ENCODE measurements at regions of chr17 and their contacts with region 1.

Region 1: GRCh38 chr17:50949989-50950881 is 84.1 kb upstream of the TOB1 start:
- DNase-seq: peak; percentile 33
- H3K4me3 ChIP-seq: no peak overlapping the region
- CTCF ChIP-seq: peak; percentile 69

Region 2: DNA sequence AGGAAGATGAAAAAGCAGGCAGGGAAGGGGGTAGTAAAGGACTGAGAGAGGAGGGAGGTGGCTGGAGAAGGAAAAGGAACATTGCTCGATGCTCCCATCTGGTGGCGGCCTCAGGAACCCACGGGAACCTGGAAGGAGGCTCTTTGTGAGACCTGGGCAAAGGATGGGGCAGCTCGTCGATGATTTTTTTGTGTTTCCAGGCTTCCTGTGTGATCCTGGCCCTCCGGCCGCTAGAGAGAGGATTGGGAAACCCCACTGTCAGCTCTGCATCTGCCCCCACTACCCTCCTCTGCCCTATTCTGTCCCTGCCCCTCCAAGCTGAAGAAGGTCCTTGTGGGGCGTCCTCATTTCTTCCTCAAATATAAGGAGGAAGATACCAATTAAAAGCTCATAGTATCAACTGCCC is 108.3 kb before region 1 on chr17:
- in situ Hi-C with region 1: loop called (anchors 10 kb)
- DNase-seq: peak; percentile 39
- H3K4me3 ChIP-seq: no peak overlapping the region
- CTCF ChIP-seq: peak; percentile 87

Region 3: GRCh38 chr17:50865984-50866774 is 84.1 kb before region 1 on chr17 and contains the start of gene TOB1:
- in situ Hi-C with region 1: loop called (anchors 5 kb)
- DNase-seq: peak; percentile 77
- H3K4me3 ChIP-seq: peak within 1 kb of the TSS; percentile 72
- CTCF ChIP-seq: no peak

Region 4: GRCh38 chr17:51035431-51035830 is 85.2 kb after region 1 on chr17:
- in situ Hi-C with region 1: no loop called
- DNase-seq: peak; percentile 91
- H3K4me3 ChIP-seq: no peak overlapping the region
- CTCF ChIP-seq: no peak

Measured in astrocyte of the cerebellum (primary cell).